Aorta (tissue), 5 donors: ENCODE measurements at regions of chr1 and their contacts with region 1.

Region 1: GRCh38 chr1:167043752-167044488 is 46.3 kb downstream of the GPA33 start:
- DNase-seq: peak; percentile 71 to 86
- ATAC-seq: peak; percentile 71
- H3K4me3 ChIP-seq: peak overlapping the region in 1 of 2 donors; percentile 29
- H3K27ac ChIP-seq: no peak overlapping the region
- H3K4me1 ChIP-seq: no peaks in the 10 kb centered on the region
- H3K27me3 ChIP-seq: no peaks in the 10 kb centered on the region

Region 2: DNA sequence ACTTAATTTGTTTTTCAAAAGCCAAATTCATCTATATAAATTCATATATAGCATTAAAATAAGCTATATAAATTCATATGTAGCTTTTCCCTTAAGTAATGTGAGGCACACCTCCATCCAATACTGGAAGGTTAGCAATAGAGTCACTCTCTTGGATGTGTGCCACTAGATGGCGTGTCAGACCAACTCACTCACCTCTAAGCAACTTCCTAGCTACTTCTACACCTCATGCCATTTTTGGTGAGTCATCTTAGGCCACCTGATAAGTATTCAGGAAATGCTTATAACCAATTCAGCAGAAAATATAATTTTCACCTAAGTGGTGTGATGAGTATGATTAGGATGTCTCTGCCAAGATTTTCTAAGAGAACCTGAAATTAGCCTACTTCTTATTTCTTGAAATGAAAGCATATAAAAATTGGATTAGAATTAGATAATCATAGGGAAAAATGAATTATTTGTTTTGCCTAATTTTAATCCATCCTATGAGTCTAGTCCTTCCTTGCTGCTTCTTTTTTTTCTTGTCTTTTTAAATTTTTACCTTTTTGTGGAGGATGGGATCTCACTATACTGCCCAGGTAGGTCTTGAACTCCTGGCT is 133.4 kb before region 1 on chr1:
- intact Hi-C with region 1: loop called in 1 of 2 experiments (anchors 5 kb)
- DNase-seq: peak in 1 of 2 donors; percentile 62
- ATAC-seq: peak; percentile 68
- H3K4me3 ChIP-seq: no peak overlapping the region
- H3K27ac ChIP-seq: no peak overlapping the region
- H3K4me1 ChIP-seq: no peaks in the 10 kb centered on the region
- H3K27me3 ChIP-seq: no peaks in the 10 kb centered on the region